Calu3 (cell line): ENCODE measurements at regions of chr1 and their contacts with region 1.

Region 1: DNA sequence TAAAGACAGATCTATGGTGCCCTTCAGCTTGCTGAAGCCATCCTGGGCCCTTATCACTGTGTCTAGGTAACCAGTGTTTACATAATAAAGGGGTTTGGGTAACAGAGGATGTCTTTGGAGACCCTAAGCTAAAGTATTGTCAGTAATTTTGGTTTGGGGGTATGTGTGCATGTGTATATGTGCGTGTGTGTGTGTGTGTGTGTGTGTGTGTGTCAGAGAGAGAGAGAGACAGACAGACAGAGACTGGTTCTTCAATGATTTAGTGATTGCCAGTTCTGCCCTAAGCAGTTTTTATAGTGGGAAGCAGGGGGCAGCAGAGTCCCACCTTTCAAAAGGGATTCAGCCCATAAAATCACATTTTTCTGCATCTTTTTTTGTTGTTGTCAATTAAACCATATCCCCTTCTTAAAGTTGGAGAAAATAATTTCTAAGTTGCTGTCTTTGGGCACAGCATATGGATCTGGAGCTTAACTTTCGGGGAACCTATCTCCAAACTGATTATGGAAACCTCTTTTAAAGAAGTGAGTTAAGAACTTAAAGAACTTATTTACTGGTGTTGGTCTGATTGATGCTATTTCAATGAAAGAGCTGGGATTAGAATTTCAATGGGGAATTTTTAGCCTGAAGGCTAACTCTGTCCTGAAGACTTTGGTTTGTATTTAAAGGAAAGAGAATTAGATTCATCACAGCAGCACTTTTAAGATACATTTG is 51.1 kb downstream of the ZNF326 start:
- DNase-seq: peak; percentile 24
- H3K4me3 Mint-ChIP-seq: no peak overlapping the region
- H3K27ac Mint-ChIP-seq: no peak overlapping the region
- H3K4me1 Mint-ChIP-seq: no peaks in the 10 kb centered on the region
- H3K27me3 Mint-ChIP-seq: no peaks in the 10 kb centered on the region
- CTCF ChIP-seq: peak; percentile 56

Region 2: DNA sequence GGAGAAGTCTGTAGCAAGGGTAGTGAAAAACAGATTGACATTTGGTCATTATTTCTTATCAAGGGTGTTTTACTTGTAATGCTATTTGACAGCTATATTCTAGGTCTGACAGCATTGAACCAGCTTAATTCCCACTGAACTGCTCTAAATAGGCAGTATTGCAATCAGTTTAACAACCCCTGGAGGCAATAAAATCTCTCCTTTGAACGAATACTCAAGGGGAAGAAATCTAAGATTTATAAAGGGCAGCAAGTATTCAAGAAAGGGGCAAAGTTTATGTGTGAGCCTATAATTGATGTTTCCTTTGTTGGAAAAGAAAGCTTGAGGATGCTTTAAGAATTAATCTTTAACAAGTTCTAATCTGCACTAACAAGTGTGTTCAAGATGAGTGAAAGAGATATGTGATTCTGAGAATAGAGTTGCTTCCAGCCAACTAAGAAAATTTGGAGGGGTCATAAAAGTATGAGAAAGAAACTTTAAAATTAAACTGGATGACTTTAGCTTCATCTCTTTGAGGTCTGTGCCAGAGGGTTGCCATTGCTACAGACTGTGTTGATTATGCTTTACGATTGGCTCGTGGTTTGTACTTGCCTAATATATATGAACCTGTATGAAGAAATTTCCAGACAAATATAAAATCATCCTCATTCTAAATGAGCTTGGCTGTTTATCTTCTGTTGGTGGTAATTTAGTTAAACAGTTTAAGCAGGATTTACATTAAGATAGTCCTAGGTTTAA is 21.4 kb after region 1 on chr1:
- CTCF ChIA-PET with region 1: no interaction called
- intact Hi-C with region 1: loop called (anchors 2 kb)
- DNase-seq: no peak
- H3K4me3 Mint-ChIP-seq: no peak overlapping the region
- H3K27ac Mint-ChIP-seq: no peak overlapping the region
- H3K4me1 Mint-ChIP-seq: no peaks in the 10 kb centered on the region
- H3K27me3 Mint-ChIP-seq: peaks cover 36% of the 10 kb centered on the region
- CTCF ChIP-seq: no peak

Region 3: DNA sequence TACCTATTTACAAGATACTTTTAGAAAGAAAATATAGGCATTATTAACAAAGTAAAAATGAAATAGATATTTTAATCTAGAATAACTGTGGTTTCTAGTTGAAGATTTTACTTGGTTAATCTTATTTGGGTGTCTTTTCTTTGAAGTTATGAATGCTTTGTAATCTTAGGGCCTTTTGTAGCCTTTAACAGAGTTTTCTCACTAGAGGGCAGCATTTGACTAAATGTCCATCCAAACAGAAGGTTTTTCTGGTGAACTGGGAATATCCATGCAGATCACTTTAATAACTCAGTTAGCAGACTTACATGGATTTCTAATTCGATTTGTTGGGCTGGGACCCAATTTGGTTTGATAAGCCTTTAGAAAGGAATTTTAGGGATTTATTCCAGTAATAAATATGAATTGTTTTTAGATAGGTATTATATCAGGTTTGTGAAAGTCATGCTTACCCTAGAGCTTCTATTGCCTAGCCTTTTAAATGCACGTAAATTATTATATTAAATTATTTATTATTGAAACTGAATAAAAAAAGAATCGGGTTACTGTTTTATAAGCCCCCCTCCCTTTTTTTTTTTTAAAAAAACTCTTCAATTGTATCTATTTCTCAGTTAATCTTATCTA is 68.6 kb after region 1 on chr1:
- CTCF ChIA-PET with region 1: no interaction called
- intact Hi-C with region 1: loop called (anchors 2 kb)
- DNase-seq: peak; percentile 17
- H3K4me3 Mint-ChIP-seq: no peak overlapping the region
- H3K27ac Mint-ChIP-seq: no peak overlapping the region
- H3K4me1 Mint-ChIP-seq: no peaks in the 10 kb centered on the region
- H3K27me3 Mint-ChIP-seq: peaks cover 29% of the 10 kb centered on the region
- CTCF ChIP-seq: no peak

Region 4: GRCh38 chr1:90291431-90292216 is 245.6 kb after region 1 on chr1:
- CTCF ChIA-PET with region 1: no interaction called
- intact Hi-C with region 1: no loop called
- DNase-seq: no peak
- H3K4me3 Mint-ChIP-seq: no peak overlapping the region
- H3K27ac Mint-ChIP-seq: no peak overlapping the region
- H3K4me1 Mint-ChIP-seq: no peaks in the 10 kb centered on the region
- H3K27me3 Mint-ChIP-seq: peaks cover 48% of the 10 kb centered on the region
- CTCF ChIP-seq: no peak